Esophagus squamous epithelium (tissue), 5 donors: ENCODE measurements at regions of chr4 and their contacts with region 1.

Region 1: GRCh38 chr4:122758033-122758432 is 25.5 kb downstream of the BBS12 start:
- DNase-seq: no peak
- H3K4me3 ChIP-seq: no peak overlapping the region
- H3K27ac ChIP-seq: no peak overlapping the region
- H3K4me1 ChIP-seq: peaks cover 0 to 10% (median 6%) of the 10 kb centered on the region in 3 donors
- H3K27me3 ChIP-seq: peaks cover 0 to 6% (median 0%) of the 10 kb centered on the region in 4 donors
- CTCF ChIP-seq: peak in 5 of 6 experiments; percentile 64 to 79 (median 72)
- POLR2A ChIP-seq: no peak

Region 2: DNA sequence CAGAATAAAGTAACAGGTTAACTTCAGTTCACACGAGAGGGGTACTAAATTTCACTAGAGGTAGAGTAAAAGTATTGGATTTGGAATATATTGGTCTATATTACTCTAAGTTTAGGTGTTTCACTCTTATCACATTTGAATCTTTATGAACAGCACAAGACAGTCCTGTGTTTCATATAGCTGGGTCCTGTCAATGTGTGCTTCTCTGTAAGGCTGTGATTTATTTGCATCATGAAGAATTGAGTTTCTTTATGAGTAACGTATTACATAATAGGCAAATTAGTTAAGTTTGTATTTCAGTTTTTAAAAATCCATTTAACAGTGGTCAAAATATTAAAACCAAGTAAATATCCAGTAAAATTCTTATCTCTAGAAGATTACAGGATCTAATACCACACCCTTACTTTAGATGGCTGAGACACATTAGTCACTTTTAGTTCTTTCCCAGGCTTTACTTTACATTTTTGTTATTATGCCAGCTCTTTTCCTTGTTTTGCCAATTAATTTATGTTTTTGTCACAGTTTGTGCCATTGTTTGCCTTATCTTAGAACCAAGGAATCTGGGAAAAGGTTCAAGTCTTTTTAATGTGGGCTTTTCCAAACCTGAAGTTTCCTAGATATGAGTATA is 132.2 kb after region 1 on chr4:
- intact Hi-C with region 1: no loop called
- DNase-seq: no peak
- H3K4me3 ChIP-seq: no peak overlapping the region
- H3K27ac ChIP-seq: peak overlapping the region in 1 of 4 donors; percentile 3
- H3K4me1 ChIP-seq: peaks cover 0 to 11% (median 8%) of the 10 kb centered on the region in 3 donors
- H3K27me3 ChIP-seq: no peaks in the 10 kb centered on the region
- CTCF ChIP-seq: no peak
- POLR2A ChIP-seq: no peak

Region 3: GRCh38 chr4:122914292-122914904 is 156.4 kb after region 1 on chr4:
- intact Hi-C with region 1: loop called (anchors 10 kb)
- DNase-seq: no peak
- H3K4me3 ChIP-seq: no peak overlapping the region
- H3K27ac ChIP-seq: no peak overlapping the region
- H3K4me1 ChIP-seq: no peaks in the 10 kb centered on the region
- H3K27me3 ChIP-seq: no peaks in the 10 kb centered on the region
- CTCF ChIP-seq: peak in 5 of 6 experiments; percentile 7 to 64 (median 25)
- POLR2A ChIP-seq: no peak

Region 4: DNA sequence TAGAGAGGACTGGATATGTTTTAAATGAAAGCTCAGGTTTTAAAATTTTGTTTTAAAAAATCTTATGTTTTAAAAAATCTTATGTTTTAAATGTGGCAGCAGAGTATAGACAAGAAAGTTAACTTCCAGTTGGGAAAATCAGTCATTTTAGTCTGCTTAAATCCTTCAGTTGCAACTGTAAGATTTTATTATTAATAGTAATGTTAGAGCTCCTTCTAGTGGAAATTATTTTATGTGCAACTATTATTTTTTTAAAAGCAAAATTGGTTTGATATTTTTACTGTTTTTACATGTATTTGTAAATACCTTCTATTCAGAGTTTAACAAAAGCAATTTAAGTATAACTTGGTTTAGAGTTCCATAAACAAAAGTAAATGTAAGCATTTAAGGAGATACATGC is 172.8 kb after region 1 on chr4:
- intact Hi-C with region 1: loop called (anchors 5 kb)
- DNase-seq: no peak
- H3K4me3 ChIP-seq: no peak overlapping the region
- H3K27ac ChIP-seq: no peak overlapping the region
- H3K4me1 ChIP-seq: no peaks in the 10 kb centered on the region
- H3K27me3 ChIP-seq: no peaks in the 10 kb centered on the region
- CTCF ChIP-seq: peak in 4 of 6 experiments; percentile 35 to 68 (median 59)
- POLR2A ChIP-seq: no peak